ENCODE measurements at regions of chr19 and their contacts with region 1.

Region 1: GRCh38 chr19:13155472-13156359 is 5.5 kb downstream of the IER2 start:
- DNase-seq: peak; percentile 86
- H3K4me3 Mint-ChIP-seq: peak overlapping the region; percentile 99
- H3K27ac Mint-ChIP-seq: peak overlapping the region; percentile 100
- H3K4me1 Mint-ChIP-seq: peaks cover 40% of the 10 kb centered on the region
- H3K27me3 Mint-ChIP-seq: no peaks in the 10 kb centered on the region

Region 2: GRCh38 chr19:12789904-12790619 is 365.7 kb before region 1 on chr19:
- CTCF ChIA-PET with region 1: no interaction called
- intact Hi-C with region 1: loop called (anchors 2 kb)
- DNase-seq: peak; percentile 97
- H3K4me3 Mint-ChIP-seq: peak overlapping the region; percentile 97
- H3K27ac Mint-ChIP-seq: peak overlapping the region; percentile 96
- H3K4me1 Mint-ChIP-seq: peaks cover 25% of the 10 kb centered on the region
- H3K27me3 Mint-ChIP-seq: no peaks in the 10 kb centered on the region

Region 3: GRCh38 chr19:13172068-13172896 is 16.6 kb after region 1 on chr19:
- CTCF ChIA-PET with region 1: interaction called, 6 read pairs
- intact Hi-C with region 1: loop called (anchors 1 kb)
- DNase-seq: peak; percentile 93
- H3K4me3 Mint-ChIP-seq: peak overlapping the region; percentile 90
- H3K27ac Mint-ChIP-seq: peak overlapping the region; percentile 99
- H3K4me1 Mint-ChIP-seq: peaks cover 61% of the 10 kb centered on the region
- H3K27me3 Mint-ChIP-seq: no peaks in the 10 kb centered on the region